Ovary (tissue), 10 donors: ENCODE measurements at regions of chr5 and their contacts with region 1.

Region 1: DNA sequence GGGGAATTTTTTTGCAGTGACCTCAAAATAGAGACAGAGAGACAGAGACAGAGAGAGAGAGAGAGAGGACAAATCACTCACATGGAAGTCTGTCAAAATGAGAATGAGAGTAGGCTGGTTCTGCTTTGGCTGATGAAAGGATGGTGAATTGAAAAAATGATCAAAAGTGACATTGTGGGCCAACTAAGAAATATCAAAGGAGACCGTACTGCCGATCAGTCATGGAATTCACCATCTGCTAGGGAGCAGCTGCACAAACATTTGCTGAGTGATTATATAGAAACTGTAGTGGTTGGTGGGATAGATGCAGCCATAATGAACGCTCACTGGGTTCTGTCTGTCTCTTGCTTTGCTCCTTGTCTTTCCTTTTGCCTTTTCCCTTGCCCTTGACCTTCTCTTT is 476.6 kb upstream of the SGCD start:
- DNase-seq: no peak
- H3K4me3 ChIP-seq: no peak overlapping the region
- H3K27ac ChIP-seq: no peak overlapping the region
- H3K4me1 ChIP-seq: no peaks in the 10 kb centered on the region
- H3K27me3 ChIP-seq: no peaks in the 10 kb centered on the region
- CTCF ChIP-seq: no peak
- EP300 ChIP-seq: no peak
- POLR2A ChIP-seq: no peak

Region 2: DNA sequence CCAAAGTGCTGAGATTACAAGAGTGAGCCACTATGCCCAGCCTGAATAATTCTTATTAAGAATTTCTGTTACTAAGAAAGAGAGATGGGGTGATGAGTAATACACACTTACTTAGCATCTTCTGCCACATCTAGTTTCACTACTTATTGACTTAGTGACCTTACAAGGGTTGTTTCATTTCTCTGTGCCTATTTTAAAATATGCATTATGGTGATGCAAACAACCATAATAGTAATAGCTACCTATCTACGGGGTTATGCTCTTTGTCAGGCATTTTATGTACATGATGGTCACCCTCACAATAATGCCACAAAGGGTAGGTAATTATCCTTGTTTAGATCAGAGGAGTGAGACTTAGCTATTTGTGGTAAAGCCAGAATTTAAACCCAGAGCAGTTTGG is 22.4 kb before region 1 on chr5:
- intact Hi-C with region 1: loop called in 1 of 4 experiments (anchors 1 kb)
- DNase-seq: no peak
- H3K4me3 ChIP-seq: no peak overlapping the region
- H3K27ac ChIP-seq: no peak overlapping the region
- H3K4me1 ChIP-seq: no peaks in the 10 kb centered on the region
- H3K27me3 ChIP-seq: no peaks in the 10 kb centered on the region
- CTCF ChIP-seq: no peak
- EP300 ChIP-seq: no peak
- POLR2A ChIP-seq: no peak

Region 3: GRCh38 chr5:156164306-156164705 is 313.9 kb after region 1 on chr5:
- intact Hi-C with region 1: no loop called
- DNase-seq: no peak
- H3K4me3 ChIP-seq: no peak overlapping the region
- H3K27ac ChIP-seq: no peak overlapping the region
- H3K4me1 ChIP-seq: no peaks in the 10 kb centered on the region
- H3K27me3 ChIP-seq: no peaks in the 10 kb centered on the region
- CTCF ChIP-seq: no peak
- EP300 ChIP-seq: no peak
- POLR2A ChIP-seq: no peak